GM12878 (cell line): ENCODE measurements at regions of chr20 and their contacts with region 1.

Region 1: GRCh38 chr20:9021701-9022103 is 47.2 kb upstream of the PLCB4 start:
- DNase-seq: no peak
- ATAC-seq: no peak
- H3K4me3 ChIP-seq: no peak overlapping the region
- H3K27ac ChIP-seq: no peak overlapping the region
- H3K4me1 ChIP-seq: no peaks in the 10 kb centered on the region
- H3K27me3 ChIP-seq: no peaks in the 10 kb centered on the region
- CTCF ChIP-seq: no peak
- EP300 ChIP-seq: no peak
- POLR2A ChIP-seq: no peak
- RAD21 ChIP-seq: no peak

Region 2: DNA sequence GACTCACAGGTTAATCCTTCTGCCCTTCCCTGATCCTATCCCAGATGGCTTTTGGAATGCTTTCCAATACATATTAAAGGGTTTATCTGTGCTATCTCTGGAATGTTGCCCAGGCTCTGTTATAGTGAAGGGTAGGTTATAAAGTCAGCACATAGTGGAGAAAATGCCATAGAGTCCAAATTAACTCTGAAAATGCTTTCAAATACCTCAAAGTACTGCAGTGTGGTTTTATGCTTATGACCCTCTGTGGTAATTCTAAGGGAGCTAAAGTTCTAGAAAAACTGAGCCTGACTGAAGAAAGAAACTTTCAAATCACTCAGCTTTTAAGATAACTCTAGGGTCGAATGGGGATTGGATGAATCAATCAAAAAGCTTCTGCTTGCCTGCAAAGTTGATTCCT is 729.8 kb before region 1 on chr20:
- CTCF ChIA-PET with region 1: no interaction called
- POLR2A ChIA-PET with region 1: no interaction called
- RAD21 ChIA-PET with region 1: no interaction called
- SMC1A ChIA-PET with region 1: no interaction called
- in situ Hi-C with region 1: no loop called
- intact Hi-C with region 1: no loop called
- DNase-seq: no peak
- ATAC-seq: no peak
- H3K4me3 ChIP-seq: no peak overlapping the region
- H3K27ac ChIP-seq: no peak overlapping the region
- H3K4me1 ChIP-seq: no peaks in the 10 kb centered on the region
- H3K27me3 ChIP-seq: no peaks in the 10 kb centered on the region
- CTCF ChIP-seq: no peak
- EP300 ChIP-seq: no peak
- POLR2A ChIP-seq: no peak
- RAD21 ChIP-seq: no peak

Region 3: DNA sequence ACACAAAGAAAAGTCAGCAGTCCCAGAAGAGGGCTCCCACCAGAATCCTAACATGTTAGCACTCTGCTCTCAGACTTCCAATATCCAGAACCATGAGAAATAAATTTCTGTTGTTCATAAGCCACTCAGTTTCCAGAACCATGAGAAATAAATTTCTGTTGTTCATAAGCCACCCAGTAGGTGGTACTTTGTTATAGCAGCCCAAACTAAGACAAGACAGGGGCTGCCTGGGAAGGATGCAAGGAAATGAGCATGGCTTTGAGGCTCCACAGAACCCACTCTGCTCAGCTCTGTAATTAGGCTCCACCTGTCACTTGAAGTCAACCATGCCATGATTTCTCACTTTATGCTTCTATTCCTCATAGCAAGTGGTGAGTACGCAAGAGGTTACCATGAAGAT is 45.4 kb before region 1 on chr20:
- CTCF ChIA-PET with region 1: no interaction called
- POLR2A ChIA-PET with region 1: no interaction called
- RAD21 ChIA-PET with region 1: no interaction called
- SMC1A ChIA-PET with region 1: no interaction called
- in situ Hi-C with region 1: no loop called
- intact Hi-C with region 1: loop called (anchors 5 kb)
- DNase-seq: no peak
- ATAC-seq: no peak
- H3K4me3 ChIP-seq: no peak overlapping the region
- H3K27ac ChIP-seq: no peak overlapping the region
- H3K4me1 ChIP-seq: no peaks in the 10 kb centered on the region
- H3K27me3 ChIP-seq: no peaks in the 10 kb centered on the region
- CTCF ChIP-seq: no peak
- EP300 ChIP-seq: no peak
- POLR2A ChIP-seq: no peak
- RAD21 ChIP-seq: no peak

Region 4: DNA sequence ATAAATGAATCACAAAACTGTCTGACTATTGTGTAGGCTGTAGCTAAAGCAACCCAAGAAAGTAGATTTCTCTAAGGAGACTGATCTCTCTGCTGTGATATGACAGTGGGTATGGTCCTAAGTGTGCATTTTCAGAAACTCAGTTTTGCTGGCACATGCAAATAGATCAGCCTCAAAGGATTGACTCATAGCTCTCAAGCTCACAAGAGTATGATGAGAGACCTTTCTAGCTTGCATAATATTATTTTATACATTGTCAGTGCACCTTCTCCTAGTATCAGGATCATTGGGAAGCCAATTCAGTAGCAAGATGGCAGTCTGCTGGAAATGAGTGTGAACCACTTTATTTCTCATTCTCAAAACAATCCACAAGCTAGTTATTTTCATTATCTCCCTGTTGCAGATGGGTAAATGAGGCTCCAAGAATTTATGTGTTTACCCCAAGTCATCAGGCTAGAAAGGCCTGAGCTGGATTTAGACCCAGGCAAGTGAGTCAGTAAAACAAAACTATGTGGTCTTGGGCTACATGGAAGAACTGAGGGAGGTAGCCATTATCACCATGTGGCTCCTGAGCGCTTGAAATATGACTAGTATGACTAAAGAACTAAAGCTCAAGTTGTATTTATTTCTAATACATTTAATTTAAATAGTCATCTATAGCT is 19.3 kb after region 1 on chr20:
- CTCF ChIA-PET with region 1: no interaction called
- POLR2A ChIA-PET with region 1: no interaction called
- RAD21 ChIA-PET with region 1: no interaction called
- SMC1A ChIA-PET with region 1: no interaction called
- in situ Hi-C with region 1: no loop called
- intact Hi-C with region 1: no loop called
- DNase-seq: no peak
- ATAC-seq: no peak
- H3K4me3 ChIP-seq: no peak overlapping the region
- H3K27ac ChIP-seq: no peak overlapping the region
- H3K4me1 ChIP-seq: no peaks in the 10 kb centered on the region
- H3K27me3 ChIP-seq: no peaks in the 10 kb centered on the region
- CTCF ChIP-seq: no peak
- EP300 ChIP-seq: no peak
- POLR2A ChIP-seq: no peak
- RAD21 ChIP-seq: no peak

Region 5: DNA sequence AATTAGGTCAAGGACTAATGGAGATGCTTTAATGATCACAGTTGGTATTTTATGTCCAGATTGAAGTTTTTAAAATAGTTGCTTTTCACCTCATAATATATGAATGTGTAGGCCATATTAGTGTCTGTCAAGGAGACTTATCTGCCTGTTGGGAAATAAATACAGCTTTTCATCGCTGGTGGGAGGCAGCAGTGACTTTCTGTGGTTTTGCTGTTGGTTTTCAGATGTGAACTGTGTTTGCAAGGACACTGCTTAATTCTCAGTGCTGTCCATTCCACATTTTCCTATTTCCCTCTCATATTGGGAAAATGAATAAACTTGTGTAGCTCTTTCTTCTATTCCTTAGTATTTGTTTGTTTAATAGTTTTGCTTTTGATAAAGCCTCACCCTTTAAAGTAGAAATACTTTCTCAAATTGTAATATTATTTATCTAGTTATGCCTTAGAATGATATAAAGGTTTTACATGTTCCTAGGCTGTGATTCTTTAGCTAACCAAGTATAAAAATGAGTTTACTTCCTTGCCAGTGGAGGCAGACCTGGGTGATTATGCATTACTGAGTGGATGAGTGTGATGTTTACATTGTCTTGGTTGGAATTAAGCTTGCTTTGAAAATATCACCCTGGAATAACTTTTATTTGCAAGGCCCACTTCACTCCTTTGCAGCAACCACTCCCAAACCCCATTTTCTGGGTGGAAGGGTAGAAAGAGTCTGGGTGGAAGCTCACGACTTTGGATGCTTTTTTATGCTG is 50.4 kb after region 1 on chr20:
- CTCF ChIA-PET with region 1: no interaction called
- POLR2A ChIA-PET with region 1: no interaction called
- RAD21 ChIA-PET with region 1: no interaction called
- SMC1A ChIA-PET with region 1: no interaction called
- in situ Hi-C with region 1: loop called (anchors 5 kb)
- intact Hi-C with region 1: no loop called
- DNase-seq: no peak
- ATAC-seq: no peak
- H3K4me3 ChIP-seq: no peak overlapping the region
- H3K27ac ChIP-seq: no peak overlapping the region
- H3K4me1 ChIP-seq: no peaks in the 10 kb centered on the region
- H3K27me3 ChIP-seq: no peaks in the 10 kb centered on the region; a peak in 2 of 4 replicates
- CTCF ChIP-seq: no peak
- EP300 ChIP-seq: no peak
- POLR2A ChIP-seq: no peak
- RAD21 ChIP-seq: no peak